ENCODE measurements at regions of chr2 and their contacts with region 1.

Region 1: GRCh38 chr2:64288321-64289193 is 144.3 kb upstream of the PELI1 start:
- DNase-seq: no peak

Region 2: GRCh38 chr2:64260817-64261216 is 27.7 kb before region 1 on chr2:
- intact Hi-C with region 1: loop called in 1 of 2 experiments (anchors 2 kb)
- DNase-seq: no peak

Region 3: DNA sequence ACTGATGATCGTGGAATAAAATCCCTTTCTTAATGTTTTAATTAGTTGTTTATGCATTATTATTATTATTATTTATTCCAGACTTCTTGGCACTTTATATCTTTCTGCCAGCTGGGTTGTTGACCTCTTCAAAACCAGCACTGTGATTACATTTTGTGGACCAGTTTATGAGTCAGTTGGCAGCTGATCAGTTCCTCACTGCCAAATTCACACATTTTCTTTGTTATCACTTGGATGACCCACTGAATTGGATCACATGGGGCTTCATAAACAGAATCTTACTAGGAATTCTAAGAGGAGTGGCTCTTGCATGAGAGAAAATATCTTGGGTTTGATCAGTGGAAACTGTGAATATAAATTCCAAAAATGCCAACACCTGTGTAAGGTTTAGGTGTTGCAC is 1465.7 kb after region 1 on chr2:
- intact Hi-C with region 1: no loop called
- DNase-seq: no peak